CD8-positive, alpha-beta T cell (primary cell): ENCODE measurements at regions of chr1 and their contacts with region 1.

Region 1: GRCh38 chr1:65059930-65060538 is 88.0 kb upstream of the AK4 start:
- DNase-seq: peak in 2 of 9 experiments; percentile 47 to 60
- ATAC-seq: peak; percentile 46
- H3K4me3 ChIP-seq: no peak overlapping the region
- H3K4me3 Mint-ChIP-seq: no peak overlapping the region
- H3K27ac ChIP-seq: no peak overlapping the region
- H3K27ac Mint-ChIP-seq: no peak overlapping the region
- H3K4me1 ChIP-seq: peaks cover 29% of the 10 kb centered on the region
- H3K4me1 Mint-ChIP-seq: peaks cover 60% of the 10 kb centered on the region
- H3K27me3 ChIP-seq: no peaks in the 10 kb centered on the region
- H3K27me3 Mint-ChIP-seq: no peaks in the 10 kb centered on the region
- CTCF ChIP-seq: peak; percentile 64

Region 2: GRCh38 chr1:65209005-65209885 is 149.2 kb after region 1 on chr1:
- CTCF ChIA-PET with region 1: interaction called, 5 read pairs
- POLR2A ChIA-PET with region 1: no interaction called
- intact Hi-C with region 1: loop called in 1 of 2 experiments (anchors 5 kb)
- DNase-seq: peak in 2 of 9 experiments; percentile 15 to 23
- ATAC-seq: no peak
- H3K4me3 ChIP-seq: no peak overlapping the region
- H3K4me3 Mint-ChIP-seq: no peak overlapping the region
- H3K27ac ChIP-seq: no peak overlapping the region
- H3K27ac Mint-ChIP-seq: no peak overlapping the region
- H3K4me1 ChIP-seq: no peaks in the 10 kb centered on the region
- H3K4me1 Mint-ChIP-seq: peaks cover 2% of the 10 kb centered on the region
- H3K27me3 ChIP-seq: no peaks in the 10 kb centered on the region
- H3K27me3 Mint-ChIP-seq: peaks cover 5% of the 10 kb centered on the region
- CTCF ChIP-seq: peak; percentile 44